ENCODE measurements at regions of chr21 and their contacts with region 1.

Region 1: DNA sequence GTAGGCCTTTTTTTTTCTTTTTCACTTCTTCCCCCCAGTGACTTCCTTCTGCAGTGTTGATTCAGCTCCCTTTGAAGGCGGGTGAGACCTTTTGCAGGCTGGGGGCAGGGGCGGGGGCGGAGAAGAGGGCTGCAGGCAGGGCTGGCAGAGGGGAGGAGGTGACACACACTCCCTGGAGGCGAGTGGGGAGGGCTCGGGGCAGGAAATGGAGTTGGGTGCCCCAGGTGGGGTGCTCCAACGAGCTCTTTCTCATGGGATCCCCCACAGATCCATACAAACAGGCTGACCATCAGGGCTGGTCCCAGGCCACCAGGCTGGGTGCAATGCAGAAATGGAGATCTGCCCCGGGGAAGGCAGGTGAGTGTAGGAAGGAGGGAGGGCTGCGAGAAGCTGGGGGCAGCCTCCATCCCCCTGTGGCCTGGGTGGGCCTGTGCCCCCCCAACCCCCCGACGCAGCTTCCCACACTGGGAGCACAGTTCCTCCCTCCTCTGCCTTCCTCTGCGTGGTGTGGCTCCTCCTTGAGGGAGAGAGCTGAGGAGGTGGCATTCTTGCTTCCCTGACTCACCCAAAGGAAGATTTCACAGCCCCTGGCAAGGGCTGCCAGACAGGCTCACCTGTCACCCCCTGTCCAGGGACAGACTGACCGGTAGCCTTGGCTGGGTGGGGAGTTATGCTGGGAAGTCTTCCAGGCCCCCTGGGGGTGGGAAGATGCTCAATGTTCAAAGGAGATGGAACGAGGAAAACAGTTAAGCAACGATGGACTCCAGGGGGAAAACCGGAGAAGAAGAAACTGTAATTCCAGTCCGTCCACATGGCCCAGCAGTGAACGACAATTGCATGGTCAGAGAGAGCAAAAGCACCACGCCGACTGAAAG is 7.1 kb upstream of the ITGB2 start:
- DNase-seq: peak; percentile 70 to 94 (median 83)
- H3K4me3 ChIP-seq: peak overlapping the region; percentile 96
- H3K4me3 Mint-ChIP-seq: peak overlapping the region; percentile 79 to 100 (median 93)
- H3K27ac ChIP-seq: peak overlapping the region; percentile 70
- H3K27ac Mint-ChIP-seq: peak overlapping the region; percentile 88 to 98 (median 95)
- H3K4me1 ChIP-seq: peaks cover 66% of the 10 kb centered on the region
- H3K4me1 Mint-ChIP-seq: peaks cover 71 to 85% (median 75%) of the 10 kb centered on the region in 3 donors
- H3K27me3 ChIP-seq: no peaks in the 10 kb centered on the region
- H3K27me3 Mint-ChIP-seq: no peaks in the 10 kb centered on the region

Region 2: GRCh38 chr21:44801468-44802395 is 126.1 kb before region 1 on chr21 and contains the start of gene UBE2G2:
- CTCF ChIA-PET with region 1: interaction called, 38 read pairs
- POLR2A ChIA-PET with region 1: interaction called, 3 read pairs
- DNase-seq: peak; percentile 77 to 89 (median 83)
- H3K4me3 ChIP-seq: peak within 1 kb of the TSS; percentile 68
- H3K4me3 Mint-ChIP-seq: peak within 1 kb of the TSS; percentile 94 to 99 (median 98)
- H3K27ac ChIP-seq: peak within 1 kb of the TSS; percentile 55
- H3K27ac Mint-ChIP-seq: peak within 1 kb of the TSS; percentile 88 to 98 (median 94)
- H3K4me1 ChIP-seq: peaks cover 28% of the 10 kb centered on the region
- H3K4me1 Mint-ChIP-seq: peaks cover 32 to 54% (median 44%) of the 10 kb centered on the region in 3 donors
- H3K27me3 ChIP-seq: no peaks in the 10 kb centered on the region
- H3K27me3 Mint-ChIP-seq: no peaks in the 10 kb centered on the region
- total RNA-seq, gene UBE2G2: 112 to 116 TPM

Region 3: GRCh38 chr21:44873356-44874239 is 54.2 kb before region 1 on chr21 and contains the start of gene PTTG1IP:
- CTCF ChIA-PET with region 1: interaction called, 19 read pairs
- POLR2A ChIA-PET with region 1: interaction called, 23 read pairs
- DNase-seq: peak; percentile 99 to 100 (median 99)
- H3K4me3 ChIP-seq: peak within 1 kb of the TSS; percentile 74
- H3K4me3 Mint-ChIP-seq: peak within 1 kb of the TSS; percentile 93 to 97 (median 94)
- H3K27ac ChIP-seq: peak within 1 kb of the TSS; percentile 74
- H3K27ac Mint-ChIP-seq: peak within 1 kb of the TSS; percentile 91 to 99 (median 95)
- H3K4me1 ChIP-seq: peaks cover 48% of the 10 kb centered on the region
- H3K4me1 Mint-ChIP-seq: peaks cover 53 to 65% (median 62%) of the 10 kb centered on the region in 3 donors
- H3K27me3 ChIP-seq: no peaks in the 10 kb centered on the region
- H3K27me3 Mint-ChIP-seq: no peaks in the 10 kb centered on the region
- total RNA-seq, gene PTTG1IP: 48.2 to 50.8 TPM

Region 4: GRCh38 chr21:44892536-44893277 is 35.1 kb before region 1 on chr21:
- CTCF ChIA-PET with region 1: interaction called, 184 read pairs
- POLR2A ChIA-PET with region 1: interaction called, 12 read pairs
- DNase-seq: peak; percentile 67 to 79 (median 69)
- H3K4me3 ChIP-seq: no peak overlapping the region
- H3K4me3 Mint-ChIP-seq: no peak overlapping the region
- H3K27ac ChIP-seq: no peak overlapping the region
- H3K27ac Mint-ChIP-seq: peak overlapping the region; percentile 46 to 93 (median 81)
- H3K4me1 ChIP-seq: peaks cover 11% of the 10 kb centered on the region
- H3K4me1 Mint-ChIP-seq: peaks cover 12 to 19% (median 13%) of the 10 kb centered on the region in 3 donors
- H3K27me3 ChIP-seq: no peaks in the 10 kb centered on the region
- H3K27me3 Mint-ChIP-seq: no peaks in the 10 kb centered on the region

Region 5: DNA sequence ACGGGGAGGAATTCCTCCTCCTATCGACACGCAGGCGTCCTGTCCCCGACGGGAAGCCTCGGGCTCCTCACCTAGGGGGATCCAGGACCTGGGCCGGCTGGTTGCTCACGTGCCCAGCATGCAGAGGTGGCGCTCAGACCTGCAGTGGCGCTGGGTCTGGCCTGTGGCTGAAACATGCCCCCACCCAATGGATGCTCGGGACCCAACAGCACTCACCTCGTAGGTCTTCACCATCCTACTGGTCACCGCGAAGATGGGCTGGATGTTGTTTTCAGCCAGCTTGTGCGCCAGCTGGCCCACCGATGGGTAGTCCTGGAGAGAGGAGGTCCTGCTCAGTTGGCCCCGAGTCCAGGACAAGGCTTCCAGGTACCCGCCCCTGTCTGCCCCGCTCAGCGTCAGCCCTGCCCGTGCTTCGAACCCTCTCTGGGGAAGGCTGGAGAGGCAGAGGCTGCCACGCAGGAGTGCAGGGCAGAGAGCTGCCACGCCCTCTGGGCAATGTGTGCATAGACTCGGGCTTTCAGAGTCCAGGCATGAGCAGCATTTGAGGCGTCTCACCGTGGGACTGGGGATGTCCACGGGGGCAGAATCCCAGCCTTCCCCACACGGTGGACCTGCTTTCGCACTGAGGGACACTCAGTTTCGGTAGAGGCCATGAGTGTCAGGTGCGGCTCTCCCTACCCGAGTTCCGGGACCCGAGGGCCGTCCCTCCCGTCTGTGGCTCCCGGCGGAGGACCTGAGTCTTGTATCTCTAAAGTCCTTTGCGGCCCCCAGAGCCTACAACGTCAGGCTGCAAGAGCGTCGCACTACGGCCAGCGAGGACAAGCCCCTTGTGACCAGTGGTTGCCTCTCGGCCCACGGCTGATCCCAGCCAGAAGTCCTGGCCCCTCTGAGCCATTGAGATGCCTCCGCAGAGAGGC is 28.7 kb before region 1 on chr21:
- CTCF ChIA-PET with region 1: interaction called, 184 read pairs
- POLR2A ChIA-PET with region 1: interaction called, 12 read pairs
- DNase-seq: peak in 1 of 5 donors; percentile 44
- H3K4me3 ChIP-seq: no peak overlapping the region
- H3K4me3 Mint-ChIP-seq: no peak overlapping the region
- H3K27ac ChIP-seq: no peak overlapping the region
- H3K27ac Mint-ChIP-seq: peak overlapping the region in 2 of 8 donors; percentile 36
- H3K4me1 ChIP-seq: no peaks in the 10 kb centered on the region
- H3K4me1 Mint-ChIP-seq: peaks cover 0 to 15% (median 9%) of the 10 kb centered on the region in 3 donors
- H3K27me3 ChIP-seq: no peaks in the 10 kb centered on the region
- H3K27me3 Mint-ChIP-seq: no peaks in the 10 kb centered on the region

Region 6: GRCh38 chr21:44911389-44912157 is 16.3 kb before region 1 on chr21:
- CTCF ChIA-PET with region 1: interaction called, 219 read pairs
- POLR2A ChIA-PET with region 1: interaction called, 72 read pairs
- DNase-seq: peak; percentile 44 to 82 (median 75)
- H3K4me3 ChIP-seq: peak overlapping the region; percentile 47
- H3K4me3 Mint-ChIP-seq: peak overlapping the region; percentile 56 to 89 (median 78)
- H3K27ac ChIP-seq: peak overlapping the region; percentile 53
- H3K27ac Mint-ChIP-seq: peak overlapping the region; percentile 82 to 99 (median 93)
- H3K4me1 ChIP-seq: peaks cover 95% of the 10 kb centered on the region
- H3K4me1 Mint-ChIP-seq: peaks cover 57 to 77% (median 65%) of the 10 kb centered on the region in 3 donors
- H3K27me3 ChIP-seq: no peaks in the 10 kb centered on the region
- H3K27me3 Mint-ChIP-seq: no peaks in the 10 kb centered on the region

Region 7: DNA sequence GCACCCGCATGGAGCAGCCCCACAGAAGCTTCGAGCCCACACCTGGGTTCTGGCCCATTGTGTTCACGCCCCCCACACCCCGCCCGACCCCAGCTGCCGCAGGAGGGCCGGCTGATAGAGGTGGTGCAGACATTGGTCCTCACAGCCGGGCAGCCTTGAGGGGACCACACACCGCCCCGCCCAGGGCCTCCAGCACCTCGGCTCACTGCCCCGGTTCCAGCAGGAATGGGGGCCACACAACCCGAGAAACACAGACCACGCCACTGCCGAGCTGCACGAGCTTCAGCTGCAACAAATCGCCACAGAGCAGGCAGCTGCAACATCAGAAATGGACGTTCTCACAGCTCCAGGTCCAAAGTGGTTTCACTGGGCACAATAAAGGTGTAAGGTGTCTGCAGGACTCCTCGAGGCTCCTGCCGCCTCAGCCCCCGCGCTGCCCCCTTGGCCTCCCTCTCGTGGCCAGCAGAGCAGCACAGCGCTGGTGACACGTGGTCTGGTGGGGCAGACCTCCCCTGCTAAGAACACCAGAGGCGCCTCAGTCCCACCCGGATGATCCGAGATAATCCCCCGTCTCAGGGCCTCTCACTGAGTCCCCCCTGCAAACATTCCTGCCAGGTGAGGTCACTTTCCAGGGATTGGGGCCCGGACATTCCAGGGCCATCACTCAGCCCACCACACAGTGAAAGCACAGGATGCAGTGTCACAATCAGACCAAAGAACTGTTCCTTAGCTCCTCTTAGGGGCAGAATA is 84.3 kb after region 1 on chr21:
- CTCF ChIA-PET with region 1: no interaction called
- POLR2A ChIA-PET with region 1: no interaction called
- DNase-seq: peak in 1 of 5 donors; percentile 42
- H3K4me3 ChIP-seq: no peak overlapping the region
- H3K4me3 Mint-ChIP-seq: no peak overlapping the region
- H3K27ac ChIP-seq: no peak overlapping the region
- H3K27ac Mint-ChIP-seq: no peak overlapping the region
- H3K4me1 ChIP-seq: no peaks in the 10 kb centered on the region
- H3K4me1 Mint-ChIP-seq: no peaks in the 10 kb centered on the region
- H3K27me3 ChIP-seq: peaks cover 1% of the 10 kb centered on the region
- H3K27me3 Mint-ChIP-seq: peaks cover 25 to 64% of the 10 kb centered on the region in 2 donors